Mammary epithelial cell (primary cell): ENCODE measurements at regions of chr11 and their contacts with region 1.

Region 1: DNA sequence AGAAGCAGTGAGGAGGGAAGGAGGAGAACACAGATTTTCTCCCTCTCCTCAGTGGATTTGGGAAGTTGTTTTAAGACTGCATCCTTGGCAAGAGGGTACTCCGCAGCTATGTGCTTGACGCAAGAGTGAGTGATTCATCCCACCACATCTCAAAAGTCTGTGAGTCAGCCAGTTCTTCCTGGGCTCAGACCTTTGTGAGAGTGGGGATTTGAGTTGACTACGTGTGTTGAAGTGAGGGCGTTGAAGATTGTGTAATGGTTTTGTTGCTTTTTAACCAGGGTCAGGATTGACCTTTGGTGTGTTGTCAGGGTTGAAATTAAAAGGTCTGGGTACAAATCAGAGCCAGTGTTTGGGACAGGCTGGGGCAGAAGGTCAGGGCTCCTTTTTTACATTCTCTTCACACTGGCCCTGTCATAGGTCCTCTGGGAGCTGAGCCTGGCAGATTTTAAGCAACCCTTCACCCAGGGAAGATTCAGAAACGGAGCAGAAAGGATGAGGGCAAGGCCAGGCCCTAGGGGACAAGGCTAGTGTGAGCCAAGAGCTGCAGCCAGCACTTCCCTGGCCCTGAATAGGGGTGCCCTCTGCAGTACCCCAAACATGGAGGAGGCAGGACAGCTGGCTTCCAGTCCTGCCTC is 4.2 kb upstream of the C11orf86 start:
- DNase-seq: peak; percentile 99
- H3K4me3 ChIP-seq: no peak overlapping the region
- H3K27ac ChIP-seq: peak overlapping the region; percentile 96
- H3K4me1 ChIP-seq: peaks cover 51% of the 10 kb centered on the region
- H3K27me3 ChIP-seq: no peaks in the 10 kb centered on the region
- CTCF ChIP-seq: no peak

Region 2: DNA sequence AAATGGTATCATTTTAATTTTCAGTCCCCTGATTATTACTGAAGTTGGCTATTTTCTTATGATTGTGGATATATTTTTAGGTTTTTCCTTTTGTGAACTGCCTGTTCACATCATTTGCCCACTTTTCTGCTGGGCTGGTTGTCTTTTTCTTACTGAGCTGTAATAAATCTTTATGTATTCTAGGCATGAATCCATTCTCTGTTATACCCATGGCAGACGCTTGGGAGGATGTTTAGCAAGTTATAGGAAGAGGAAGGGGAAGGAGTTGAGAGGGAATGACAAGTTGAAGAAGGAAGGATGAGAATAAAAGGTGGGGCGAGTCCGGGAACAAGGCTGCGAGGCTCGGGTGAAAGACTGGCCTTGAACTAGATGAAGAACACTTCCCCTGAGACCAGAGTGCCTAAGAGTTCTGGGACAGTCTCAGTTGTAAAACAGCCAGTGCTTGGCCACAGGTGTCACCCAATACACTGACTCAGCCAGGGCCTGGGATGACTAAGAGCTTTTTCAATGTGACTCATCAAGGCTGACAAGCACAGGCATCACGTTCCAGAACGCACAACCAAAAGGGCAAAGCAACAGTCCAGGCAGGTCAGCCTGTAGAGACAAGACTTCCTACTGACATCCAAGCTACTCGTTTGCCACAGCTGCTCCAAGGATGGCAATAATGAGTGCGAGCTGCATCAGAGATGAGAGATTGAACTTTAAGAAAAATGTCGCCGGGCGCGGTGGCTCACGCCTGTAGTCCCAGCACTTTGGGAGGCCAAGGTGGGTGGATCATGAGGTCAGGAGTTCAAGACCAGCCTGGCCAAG is 78.9 kb before region 1 on chr11:
- CTCF ChIA-PET with region 1: no interaction called
- dilution Hi-C with region 1: loop called (anchors 5 kb)
- in situ Hi-C with region 1: no loop called
- intact Hi-C with region 1: no loop called
- DNase-seq: peak; percentile 98
- H3K4me3 ChIP-seq: no peak overlapping the region
- H3K27ac ChIP-seq: peak overlapping the region; percentile 9
- H3K4me1 ChIP-seq: peaks cover 18% of the 10 kb centered on the region
- H3K27me3 ChIP-seq: no peaks in the 10 kb centered on the region
- CTCF ChIP-seq: peak in 1 of 2 donors; percentile 10

Region 3: GRCh38 chr11:67045341-67045764 is 74.4 kb after region 1 on chr11:
- CTCF ChIA-PET with region 1: no interaction called
- dilution Hi-C with region 1: no loop called
- in situ Hi-C with region 1: no loop called
- intact Hi-C with region 1: no loop called
- DNase-seq: peak; percentile 89
- H3K4me3 ChIP-seq: no peak overlapping the region
- H3K27ac ChIP-seq: no peak overlapping the region
- H3K4me1 ChIP-seq: peaks cover 12% of the 10 kb centered on the region
- H3K27me3 ChIP-seq: no peaks in the 10 kb centered on the region
- CTCF ChIP-seq: no peak